PC-9 (cell line): ENCODE measurements at regions of chr2 and their contacts with region 1.

Region 1: GRCh38 chr2:223000872-223001796 is 50.9 kb upstream of the KCNE4 start:
- DNase-seq: no peak
- H3K4me3 ChIP-seq: no peak overlapping the region
- H3K27ac ChIP-seq: no peak overlapping the region
- H3K4me1 ChIP-seq: no peaks in the 10 kb centered on the region
- H3K27me3 ChIP-seq: no peaks in the 10 kb centered on the region
- CTCF ChIP-seq: no peak

Region 2: DNA sequence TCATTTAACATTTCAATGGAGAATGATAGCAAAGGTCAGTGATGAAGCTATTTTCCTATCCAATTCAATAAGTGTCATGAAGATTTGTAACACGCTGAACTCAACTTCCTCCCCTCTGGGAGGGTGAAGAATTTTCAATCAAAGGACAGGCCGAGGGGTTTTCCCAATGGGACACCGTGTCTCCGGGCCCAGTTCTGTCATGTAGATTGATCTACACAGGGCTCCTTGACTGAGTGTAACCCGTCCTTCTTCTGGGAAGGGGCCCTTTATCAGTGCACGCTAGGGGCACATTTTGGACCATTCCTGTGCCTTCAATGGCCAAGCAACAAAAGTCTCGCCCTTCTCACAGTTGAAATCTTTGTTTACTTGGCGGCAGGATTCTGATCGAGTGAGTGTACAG is 141.0 kb after region 1 on chr2:
- CTCF ChIA-PET with region 1: no interaction called
- POLR2A ChIA-PET with region 1: no interaction called
- intact Hi-C with region 1: loop called (anchors 5 kb)
- DNase-seq: no peak
- H3K4me3 ChIP-seq: no peak overlapping the region
- H3K27ac ChIP-seq: no peak overlapping the region
- H3K4me1 ChIP-seq: no peaks in the 10 kb centered on the region
- H3K27me3 ChIP-seq: no peaks in the 10 kb centered on the region
- CTCF ChIP-seq: no peak

Region 3: GRCh38 chr2:223700221-223700620 is 699.1 kb after region 1 on chr2:
- CTCF ChIA-PET with region 1: no interaction called
- POLR2A ChIA-PET with region 1: no interaction called
- intact Hi-C with region 1: no loop called
- DNase-seq: no peak
- H3K4me3 ChIP-seq: no peak overlapping the region
- H3K27ac ChIP-seq: peak overlapping the region; percentile 45
- H3K4me1 ChIP-seq: peaks cover 33% of the 10 kb centered on the region
- H3K27me3 ChIP-seq: no peaks in the 10 kb centered on the region
- CTCF ChIP-seq: no peak